Activated B cell treated with CpG ODN at 0.5 μM for 24 hours (primary cell): ENCODE measurements at regions of chr5 and their contacts with region 1.

Region 1: GRCh38 chr5:140690941-140691924 is at the starts of genes HARS1 and HARS2:
- DNase-seq: peak; percentile 70
- ATAC-seq: peak; percentile 95
- H3K4me3 Mint-ChIP-seq: peak within 1 kb of the TSS; percentile 100
- H3K27ac Mint-ChIP-seq: peak within 1 kb of the TSS; percentile 97
- H3K4me1 Mint-ChIP-seq: peaks cover 31% of the 10 kb centered on the region
- H3K27me3 Mint-ChIP-seq: no peaks in the 10 kb centered on the region
- CTCF ChIP-seq: no peak
- total RNA-seq, gene HARS1: 78.2 and 84.0 TPM in 2 replicates
- total RNA-seq, gene HARS2: 45.7 and 48.5 TPM in 2 replicates

Region 2: GRCh38 chr5:140564196-140565023 is 126.8 kb before region 1 on chr5 and contains the starts of genes APBB3 and SLC35A4:
- CTCF ChIA-PET with region 1: no interaction called
- POLR2A ChIA-PET with region 1: no interaction called
- intact Hi-C with region 1: loop called (anchors 1 kb)
- DNase-seq: peak; percentile 89
- ATAC-seq: peak; percentile 90
- H3K4me3 Mint-ChIP-seq: peak within 1 kb of the TSS; percentile 98
- H3K27ac Mint-ChIP-seq: peak within 1 kb of the TSS; percentile 90
- H3K4me1 Mint-ChIP-seq: peaks cover 57% of the 10 kb centered on the region
- H3K27me3 Mint-ChIP-seq: no peaks in the 10 kb centered on the region
- CTCF ChIP-seq: no peak
- total RNA-seq, gene APBB3: 36.0 and 37.5 TPM in 2 replicates
- total RNA-seq, gene SLC35A4: 76.0 and 77.9 TPM in 2 replicates

Region 3: DNA sequence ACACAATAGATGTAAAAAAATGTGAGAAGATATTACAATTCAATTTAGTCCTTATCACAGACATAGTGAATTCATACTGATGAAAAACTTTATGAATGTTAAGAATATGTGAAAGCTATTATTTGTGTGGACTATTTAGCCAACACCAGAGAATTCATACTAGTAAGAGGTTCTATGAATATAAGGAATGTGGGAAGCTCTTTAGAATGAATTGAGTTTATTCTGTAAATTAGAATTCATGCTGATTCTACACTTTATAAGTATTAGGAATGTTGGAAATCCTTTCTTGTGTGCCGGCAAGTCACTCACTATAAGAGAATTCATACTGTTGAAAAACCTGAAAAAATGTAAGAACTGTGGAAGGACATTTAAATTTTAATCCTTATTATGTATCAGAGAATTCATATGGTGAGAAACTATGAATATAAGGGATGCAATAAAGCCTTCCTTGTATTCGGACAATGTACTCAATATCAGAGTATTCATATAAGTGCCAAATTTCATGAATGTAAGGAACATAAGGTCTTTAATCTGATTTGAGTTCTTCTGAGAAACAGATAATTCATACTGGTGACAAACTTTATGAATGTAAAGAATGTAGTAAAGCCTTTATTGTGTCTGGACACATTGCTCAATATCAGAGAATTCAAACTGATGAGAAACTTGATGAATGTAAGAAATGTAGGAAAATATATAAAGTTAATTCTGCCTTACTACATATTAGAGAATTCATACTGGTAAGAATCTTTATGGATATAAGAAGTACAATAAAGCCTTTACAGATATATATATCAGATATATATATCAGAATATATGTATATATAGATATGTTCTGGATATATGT is 73.2 kb after region 1 on chr5:
- CTCF ChIA-PET with region 1: no interaction called
- POLR2A ChIA-PET with region 1: no interaction called
- intact Hi-C with region 1: no loop called
- DNase-seq: no peak
- ATAC-seq: no peak
- H3K4me3 Mint-ChIP-seq: no peak overlapping the region
- H3K27ac Mint-ChIP-seq: no peak overlapping the region
- H3K4me1 Mint-ChIP-seq: no peaks in the 10 kb centered on the region
- H3K27me3 Mint-ChIP-seq: no peaks in the 10 kb centered on the region
- CTCF ChIP-seq: no peak